Panc1 (cell line): ENCODE measurements at regions of chr2 and their contacts with region 1.

Region 1: GRCh38 chr2:118865106-118865505 is 17.7 kb upstream of the EN1 start:
- DNase-seq: no peak
- ATAC-seq: peak; percentile 95
- H3K4me3 ChIP-seq: no peak overlapping the region
- H3K27ac ChIP-seq: no peak overlapping the region
- H3K4me1 ChIP-seq: no peaks in the 10 kb centered on the region
- H3K27me3 ChIP-seq: peaks cover 3% of the 10 kb centered on the region; the same call in 1 of the 2 replicates
- CTCF ChIP-seq: peak; percentile 77

Region 2: DNA sequence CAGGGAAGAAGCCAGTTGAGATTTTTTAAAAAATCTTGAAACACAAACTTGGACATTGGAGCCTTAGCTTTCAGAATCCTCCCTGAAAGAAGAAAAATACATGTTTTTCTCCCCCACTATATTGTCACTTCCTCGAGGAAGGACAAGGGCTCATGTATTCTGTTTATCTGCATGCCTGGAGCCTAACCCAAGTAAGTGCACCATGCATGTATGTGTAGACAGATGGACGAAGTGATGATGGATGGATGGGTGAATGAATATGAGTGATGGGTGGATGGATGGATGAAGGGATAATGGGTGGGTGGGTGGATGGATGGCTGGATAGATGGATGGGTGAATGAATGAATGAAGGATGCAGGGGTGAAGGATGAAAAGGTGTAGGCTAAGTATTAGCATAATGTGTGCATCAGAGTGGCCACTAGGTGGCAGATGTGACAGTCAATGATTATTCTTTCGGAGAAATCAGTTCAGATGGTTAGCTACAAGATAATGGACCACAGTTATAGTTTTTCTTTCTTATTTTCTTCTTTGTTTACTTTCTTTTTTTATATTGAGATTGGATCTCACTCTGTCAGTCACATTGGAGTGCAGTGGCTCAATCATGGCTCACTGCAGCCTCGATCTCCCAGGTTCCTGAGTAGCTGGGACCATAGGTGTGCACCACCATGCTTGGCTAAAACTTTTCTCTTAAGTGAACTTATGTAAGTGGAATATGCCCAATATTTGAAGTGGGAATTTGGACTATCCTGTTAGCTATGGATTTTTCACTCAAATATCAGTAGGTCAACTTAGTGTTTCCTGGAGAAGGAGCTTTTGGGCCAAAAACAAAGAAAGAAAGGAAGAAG is 832.7 kb before region 1 on chr2:
- CTCF ChIA-PET with region 1: no interaction called
- POLR2A ChIA-PET with region 1: no interaction called
- in situ Hi-C with region 1: no loop called
- intact Hi-C with region 1: loop called (anchors 5 kb)
- DNase-seq: no peak
- ATAC-seq: peak; percentile 86
- H3K4me3 ChIP-seq: no peak overlapping the region
- H3K27ac ChIP-seq: no peak overlapping the region
- H3K4me1 ChIP-seq: no peaks in the 10 kb centered on the region
- H3K27me3 ChIP-seq: peaks cover 6% of the 10 kb centered on the region
- CTCF ChIP-seq: peak; percentile 88

Region 3: DNA sequence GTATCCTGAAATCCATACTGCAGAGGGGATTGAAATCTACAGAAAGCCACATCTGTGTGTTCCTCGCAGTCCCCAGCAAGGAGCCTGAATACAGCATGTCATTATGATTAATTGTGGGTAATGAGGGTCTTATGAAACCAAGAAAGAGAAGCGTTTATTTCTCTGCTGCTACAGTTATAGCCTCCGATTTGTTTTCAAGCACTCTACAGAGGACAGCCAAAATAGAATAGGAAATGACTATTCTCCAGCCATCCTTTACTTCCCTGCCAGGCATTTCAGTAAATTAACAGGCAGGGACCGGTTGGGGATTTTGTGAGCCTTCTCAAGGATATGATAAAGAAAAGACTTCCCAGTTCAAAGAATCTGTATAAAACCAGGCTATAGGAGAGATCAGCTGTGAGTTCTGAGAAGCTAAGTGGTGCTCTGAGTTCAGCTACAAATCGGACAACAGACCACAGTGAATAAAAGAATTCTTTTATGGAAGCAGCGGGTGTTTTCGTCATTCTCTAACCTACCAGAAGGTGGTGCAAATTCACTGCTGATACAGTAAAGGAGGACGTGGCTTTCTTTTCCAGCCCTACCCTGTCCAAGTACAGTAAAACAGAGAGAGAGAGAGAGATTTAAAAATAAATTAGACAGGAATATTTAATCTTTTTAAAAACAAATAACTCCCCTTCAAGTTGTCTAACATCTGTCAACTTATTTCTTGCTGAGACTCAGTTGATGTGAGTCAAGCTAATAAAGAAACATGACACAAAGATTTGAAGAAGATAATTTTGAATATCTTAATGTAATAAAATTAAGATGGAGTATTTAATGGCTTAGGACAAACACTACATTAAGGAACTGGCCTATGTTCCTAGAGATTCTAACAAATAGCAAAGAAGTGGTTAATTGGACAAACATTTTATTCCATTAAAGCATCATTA is 643.2 kb before region 1 on chr2:
- CTCF ChIA-PET with region 1: no interaction called
- POLR2A ChIA-PET with region 1: no interaction called
- in situ Hi-C with region 1: no loop called
- intact Hi-C with region 1: loop called (anchors 1 kb)
- DNase-seq: peak; percentile 64
- ATAC-seq: peak; percentile 94
- H3K4me3 ChIP-seq: no peak overlapping the region
- H3K27ac ChIP-seq: no peak overlapping the region
- H3K4me1 ChIP-seq: no peaks in the 10 kb centered on the region
- H3K27me3 ChIP-seq: peaks cover 24% of the 10 kb centered on the region
- CTCF ChIP-seq: peak; percentile 77